Activated T-helper 1 cell treated with anti-CD3 and anti-CD28 coated beads, Interleukin-12 subunit alpha, Interleukin-12 subunit beta, Interleukin-2, Interleukin-4 antibody, amounts not matched to agents 30 ng/mL and 10 ng/mL and 1 ng/mL, durations not matched to agents 14 hours and 24 hours and 36 hours (primary cell): ENCODE measurements at regions of chr6 and their contacts with region 1.

Region 1: DNA sequence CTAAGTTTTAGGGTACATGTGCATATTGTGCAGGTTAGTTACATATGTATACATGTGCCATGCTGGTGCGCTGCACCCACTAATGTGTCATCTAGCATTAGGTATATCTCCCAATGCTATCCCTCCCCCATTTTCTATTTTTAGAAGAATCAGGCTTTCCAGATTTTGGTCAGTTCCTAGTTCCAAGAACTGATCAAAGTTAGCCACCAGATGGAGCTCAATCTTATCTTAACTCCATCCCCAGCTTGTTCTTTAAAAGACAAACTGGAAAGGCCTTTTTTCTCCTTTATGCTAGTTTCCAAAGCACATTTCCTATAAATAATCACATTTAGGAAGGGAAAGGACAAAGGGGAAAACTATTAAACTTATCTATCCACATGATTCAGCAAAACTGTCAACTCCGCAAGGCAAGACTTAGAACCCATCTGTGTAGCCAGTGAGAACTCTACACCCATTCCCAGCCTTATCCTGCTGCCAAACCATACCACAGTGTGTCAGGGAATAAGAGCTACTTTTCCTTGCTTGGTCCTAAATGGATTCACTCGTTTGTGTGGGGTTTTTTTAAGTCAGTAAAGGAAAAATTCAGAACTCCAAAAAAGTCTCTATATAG is 22.8 kb upstream of the KHDC1 start:
- DNase-seq: no peak
- H3K4me3 Mint-ChIP-seq: no peak overlapping the region
- H3K27ac Mint-ChIP-seq: no peak overlapping the region
- H3K4me1 Mint-ChIP-seq: peaks cover 6% of the 10 kb centered on the region
- H3K27me3 Mint-ChIP-seq: no peaks in the 10 kb centered on the region

Region 2: GRCh38 chr6:73329201-73329600 is 43.4 kb after region 1 on chr6:
- intact Hi-C with region 1: loop called (anchors 1 kb)
- DNase-seq: no peak
- H3K4me3 Mint-ChIP-seq: no peak overlapping the region
- H3K27ac Mint-ChIP-seq: no peak overlapping the region
- H3K4me1 Mint-ChIP-seq: peaks cover 7% of the 10 kb centered on the region
- H3K27me3 Mint-ChIP-seq: peaks cover 24% of the 10 kb centered on the region

Region 3: DNA sequence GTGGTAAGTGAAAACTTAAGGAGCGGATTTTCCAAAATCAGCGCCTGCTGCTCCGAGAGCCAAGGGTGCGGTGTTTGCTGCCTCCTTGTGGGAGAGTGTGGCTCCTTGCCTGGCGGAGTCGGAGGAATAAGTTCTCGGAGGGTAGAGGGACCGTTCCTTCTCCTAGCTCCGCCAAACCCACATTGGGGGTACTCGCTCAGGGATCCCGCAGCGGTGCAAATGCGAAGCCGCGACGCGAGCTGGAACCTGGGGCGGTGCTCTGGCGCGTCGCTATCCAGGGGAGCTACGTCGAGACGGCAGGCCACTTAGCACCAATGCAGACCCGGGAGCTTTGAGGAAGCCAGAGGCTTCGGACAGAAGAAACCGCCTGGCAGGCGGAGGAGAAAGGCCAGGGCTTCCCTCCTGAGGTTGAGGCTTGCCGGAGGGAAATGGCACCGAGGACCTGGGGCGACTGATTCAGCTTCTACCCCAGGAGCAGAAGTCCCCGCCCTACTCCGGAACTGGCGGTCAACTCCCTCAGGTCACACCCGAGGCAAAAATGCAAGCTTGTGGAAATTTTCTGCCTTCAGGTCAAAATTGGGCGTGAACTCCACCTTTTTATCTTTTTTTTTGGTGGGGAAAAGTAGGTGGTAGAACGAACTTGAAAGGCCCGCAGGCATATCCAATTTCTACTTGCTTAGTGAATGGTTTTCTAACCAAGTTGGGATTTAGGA is 103.2 kb after region 1 on chr6:
- intact Hi-C with region 1: loop called (anchors 1 kb)
- DNase-seq: peak; percentile 51
- H3K4me3 Mint-ChIP-seq: peak overlapping the region; percentile 75
- H3K27ac Mint-ChIP-seq: peak overlapping the region; percentile 74
- H3K4me1 Mint-ChIP-seq: peaks cover 19% of the 10 kb centered on the region
- H3K27me3 Mint-ChIP-seq: peaks cover 3% of the 10 kb centered on the region